ENCODE measurements at regions of chr5 and their contacts with region 1.

Region 1: DNA sequence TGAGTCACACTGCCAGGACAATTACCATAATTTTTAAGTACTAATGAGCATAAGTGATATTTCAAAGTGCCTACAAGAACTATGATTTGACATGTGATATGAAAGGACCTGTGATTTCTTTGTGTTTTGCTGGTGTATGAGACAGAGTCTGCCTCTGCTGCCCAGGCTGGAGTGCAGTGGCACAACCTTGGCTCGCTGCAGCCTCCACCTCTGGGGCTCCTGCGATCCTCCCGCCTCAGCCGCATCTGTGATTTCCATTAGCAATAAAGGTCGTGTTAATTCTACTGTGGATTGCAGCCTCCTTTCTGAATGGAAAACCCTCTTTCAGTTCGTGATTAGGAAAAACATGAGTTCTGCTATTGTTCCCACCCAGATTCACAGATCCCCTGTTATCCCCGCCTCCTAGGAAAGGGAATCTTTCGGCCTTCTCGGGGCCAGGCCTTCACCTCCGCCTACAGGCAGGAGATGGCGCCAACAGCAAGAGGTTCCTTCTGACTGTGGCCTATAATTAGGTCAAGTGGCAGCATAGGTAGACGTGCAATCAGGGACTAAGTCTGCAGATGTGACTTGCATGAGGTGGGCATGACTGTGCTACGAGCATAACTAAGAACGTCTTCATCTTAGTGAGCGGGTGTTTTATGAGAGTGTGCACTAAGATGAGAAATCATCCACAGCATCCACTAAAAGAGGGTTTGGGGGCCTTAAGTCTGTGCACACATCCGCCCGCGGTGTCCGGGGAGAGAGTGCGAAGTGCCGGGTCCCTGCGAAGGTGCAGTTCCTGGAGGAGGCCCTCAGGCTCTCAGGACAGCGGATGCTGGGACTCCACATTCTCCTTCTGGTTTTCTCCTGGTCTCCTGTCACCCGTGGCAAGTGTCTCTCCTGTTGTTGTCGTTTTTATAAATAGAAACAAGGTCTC is 23.1 kb downstream of the TRIM7 start:
- DNase-seq: peak; percentile 78 to 79
- H3K4me3 ChIP-seq: no peak overlapping the region
- H3K4me3 Mint-ChIP-seq: peak overlapping the region; percentile 53
- H3K27ac Mint-ChIP-seq: no peak overlapping the region
- H3K4me1 ChIP-seq: no peaks in the 10 kb centered on the region; the same call in 1 of the 2 replicates
- H3K4me1 Mint-ChIP-seq: no peaks in the 10 kb centered on the region
- H3K27me3 ChIP-seq: no peaks in the 10 kb centered on the region
- H3K27me3 Mint-ChIP-seq: no peaks in the 10 kb centered on the region
- CTCF ChIP-seq: peak; percentile 63 to 84

Region 2: DNA sequence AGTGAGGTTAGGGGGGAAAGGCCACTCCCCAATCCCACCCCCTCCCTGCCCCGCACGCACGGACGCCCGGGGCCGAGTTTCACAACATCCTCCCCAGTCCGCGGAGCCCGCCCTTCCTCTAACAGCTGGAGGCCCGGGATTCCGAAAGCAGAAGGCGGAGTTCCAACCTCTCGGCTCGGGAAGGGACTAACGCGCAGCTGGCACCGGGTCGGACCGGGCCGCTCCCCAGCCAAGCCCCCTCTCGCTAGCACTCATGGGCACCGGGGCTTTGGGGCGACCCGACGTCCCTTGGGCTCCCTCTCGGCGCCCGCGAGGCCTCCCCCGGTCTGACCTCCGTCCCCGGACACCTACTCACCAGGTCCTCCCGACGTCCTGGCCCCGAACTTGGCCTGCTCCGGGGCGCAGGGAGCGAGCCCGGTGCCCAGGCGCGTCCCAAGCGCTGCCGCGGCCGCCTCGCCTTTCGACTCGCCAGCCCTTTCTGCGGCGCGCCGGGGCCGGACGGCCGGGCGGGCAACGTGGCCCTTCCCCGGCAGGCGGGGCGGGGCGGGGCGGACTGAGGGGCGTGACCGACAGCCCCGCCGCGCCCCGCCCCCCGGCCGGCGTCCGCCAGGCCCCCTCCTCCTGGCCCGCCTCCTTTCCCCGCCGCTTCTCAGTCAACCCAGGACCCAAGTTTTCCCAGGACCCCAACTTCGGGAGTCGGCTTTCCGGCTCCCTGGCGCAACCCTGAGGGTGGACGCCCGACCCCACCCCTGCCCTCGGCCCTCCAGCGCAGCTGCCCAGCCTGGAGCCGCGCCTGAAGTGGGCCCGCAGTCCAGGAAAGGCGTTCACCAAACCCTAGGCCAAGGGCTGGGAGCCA is 379.4 kb before region 1 on chr5 and contains the start of gene MGAT1:
- CTCF ChIA-PET with region 1: interaction called, 11 read pairs
- POLR2A ChIA-PET with region 1: no interaction called
- intact Hi-C with region 1: no loop called
- DNase-seq: peak; percentile 83 to 89
- H3K4me3 ChIP-seq: peak within 1 kb of the TSS; percentile 88
- H3K4me3 Mint-ChIP-seq: peak within 1 kb of the TSS; percentile 82
- H3K27ac Mint-ChIP-seq: peak within 1 kb of the TSS; percentile 89
- H3K4me1 ChIP-seq: peaks cover 43% of the 10 kb centered on the region
- H3K4me1 Mint-ChIP-seq: peaks cover 45% of the 10 kb centered on the region
- H3K27me3 ChIP-seq: no peaks in the 10 kb centered on the region
- H3K27me3 Mint-ChIP-seq: no peaks in the 10 kb centered on the region
- CTCF ChIP-seq: no peak
- total RNA-seq, gene MGAT1: 80.1 and 82.5 TPM in 2 replicates

Region 3: GRCh38 chr5:180860887-180861822 is 320.8 kb before region 1 on chr5 and contains the start of gene ZFP62:
- CTCF ChIA-PET with region 1: no interaction called
- POLR2A ChIA-PET with region 1: interaction called, 6 read pairs
- intact Hi-C with region 1: loop called (anchors 2 kb)
- DNase-seq: peak; percentile 94 to 97
- H3K4me3 ChIP-seq: peak within 1 kb of the TSS; percentile 87
- H3K4me3 Mint-ChIP-seq: peak within 1 kb of the TSS; percentile 92
- H3K27ac Mint-ChIP-seq: peak within 1 kb of the TSS; percentile 87
- H3K4me1 ChIP-seq: peaks cover 10% of the 10 kb centered on the region; the same call in 1 of the 2 replicates
- H3K4me1 Mint-ChIP-seq: peaks cover 27% of the 10 kb centered on the region
- H3K27me3 ChIP-seq: no peaks in the 10 kb centered on the region
- H3K27me3 Mint-ChIP-seq: no peaks in the 10 kb centered on the region
- CTCF ChIP-seq: peak in 1 of 2 experiments; percentile 0
- total RNA-seq, gene ZFP62: 34.4 and 35.9 TPM in 2 replicates

Region 4: DNA sequence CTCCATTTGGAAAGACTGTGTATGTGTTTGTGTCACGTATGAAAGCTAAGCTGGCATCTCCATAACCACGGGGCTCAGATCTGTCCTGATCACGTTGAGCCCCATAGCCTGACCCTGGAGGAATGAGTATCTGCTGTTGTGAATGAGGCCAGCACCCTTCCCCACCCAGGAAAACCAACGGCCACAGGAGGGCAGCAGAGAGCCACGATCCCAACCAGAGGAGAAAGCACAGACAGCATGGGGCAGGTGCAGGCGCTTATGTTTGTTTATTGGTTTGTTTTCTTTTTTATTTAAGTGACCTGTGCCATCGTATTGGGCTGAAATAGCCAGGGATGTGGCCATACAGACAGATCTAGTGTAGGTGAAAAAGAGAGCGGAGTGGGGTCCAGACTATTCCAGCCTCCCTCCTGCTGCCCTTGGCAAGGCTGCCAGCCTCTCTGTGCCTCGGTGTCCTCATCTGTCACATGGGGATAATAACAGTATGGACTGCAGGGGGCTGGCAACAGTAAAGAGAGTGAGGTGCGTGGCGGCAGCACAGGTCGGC is 22.6 kb before region 1 on chr5:
- CTCF ChIA-PET with region 1: interaction called, 6 read pairs
- POLR2A ChIA-PET with region 1: no interaction called
- intact Hi-C with region 1: loop called (anchors 1 kb)
- DNase-seq: peak; percentile 89 to 93
- H3K4me3 ChIP-seq: no peak overlapping the region
- H3K4me3 Mint-ChIP-seq: peak overlapping the region; percentile 22
- H3K27ac Mint-ChIP-seq: peak overlapping the region; percentile 70
- H3K4me1 ChIP-seq: peaks cover 11% of the 10 kb centered on the region
- H3K4me1 Mint-ChIP-seq: peaks cover 7% of the 10 kb centered on the region
- H3K27me3 ChIP-seq: no peaks in the 10 kb centered on the region
- H3K27me3 Mint-ChIP-seq: peaks cover 3% of the 10 kb centered on the region
- CTCF ChIP-seq: peak; percentile 92 to 93

Region 5: DNA sequence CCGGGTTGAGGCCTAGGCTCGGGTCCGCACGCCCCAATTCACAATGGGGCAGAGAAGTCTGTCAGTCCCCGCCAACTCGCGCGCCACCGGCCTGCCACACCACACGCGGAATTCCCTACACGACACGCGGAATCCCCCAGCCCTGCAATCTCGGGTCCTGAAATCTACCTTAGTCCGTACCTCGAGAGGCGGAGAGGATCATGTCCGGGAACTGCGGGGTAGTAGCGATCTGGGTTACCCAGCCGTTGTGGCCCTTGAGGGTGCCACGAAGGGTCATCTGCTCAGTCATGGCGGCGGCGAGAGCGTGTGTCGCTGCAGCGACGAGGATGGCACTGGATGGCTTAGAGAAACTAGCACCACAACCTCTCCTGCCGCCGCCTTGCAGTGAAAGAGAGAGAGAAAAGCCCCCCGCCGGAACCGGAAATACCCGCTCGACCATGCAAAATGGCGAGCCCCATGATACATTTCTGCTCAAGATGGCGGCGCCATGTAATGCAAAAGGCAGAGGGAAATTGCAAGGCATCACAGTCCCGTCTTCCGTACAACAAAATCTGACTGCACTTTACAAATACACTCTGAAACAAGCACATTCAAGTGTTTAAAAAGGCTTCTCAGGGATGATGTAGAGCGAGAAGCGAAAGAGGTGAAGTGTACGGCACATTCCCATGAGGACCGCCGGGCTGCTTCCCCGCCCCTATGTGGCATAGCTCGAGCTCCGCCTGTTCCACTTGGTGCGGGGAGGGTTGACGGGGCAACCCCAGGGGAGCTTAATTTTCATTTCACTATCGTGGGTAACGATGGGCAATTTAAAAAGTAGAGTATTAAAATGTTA is 61.8 kb after region 1 on chr5 and contains the start of gene RACK1:
- CTCF ChIA-PET with region 1: interaction called, 4 read pairs
- POLR2A ChIA-PET with region 1: interaction called, 6 read pairs
- intact Hi-C with region 1: loop called (anchors 2 kb)
- DNase-seq: peak; percentile 91 to 92
- H3K4me3 ChIP-seq: peak within 1 kb of the TSS; percentile 87
- H3K4me3 Mint-ChIP-seq: peak within 1 kb of the TSS; percentile 97
- H3K27ac Mint-ChIP-seq: peak within 1 kb of the TSS; percentile 100
- H3K4me1 ChIP-seq: peaks cover 26% of the 10 kb centered on the region
- H3K4me1 Mint-ChIP-seq: peaks cover 19% of the 10 kb centered on the region
- H3K27me3 ChIP-seq: no peaks in the 10 kb centered on the region
- H3K27me3 Mint-ChIP-seq: no peaks in the 10 kb centered on the region
- CTCF ChIP-seq: no peak
- total RNA-seq, gene RACK1: 2,098 and 2,258 TPM in 2 replicates